ENCODE measurements at regions of chr5 and their contacts with region 1.

Region 1: DNA sequence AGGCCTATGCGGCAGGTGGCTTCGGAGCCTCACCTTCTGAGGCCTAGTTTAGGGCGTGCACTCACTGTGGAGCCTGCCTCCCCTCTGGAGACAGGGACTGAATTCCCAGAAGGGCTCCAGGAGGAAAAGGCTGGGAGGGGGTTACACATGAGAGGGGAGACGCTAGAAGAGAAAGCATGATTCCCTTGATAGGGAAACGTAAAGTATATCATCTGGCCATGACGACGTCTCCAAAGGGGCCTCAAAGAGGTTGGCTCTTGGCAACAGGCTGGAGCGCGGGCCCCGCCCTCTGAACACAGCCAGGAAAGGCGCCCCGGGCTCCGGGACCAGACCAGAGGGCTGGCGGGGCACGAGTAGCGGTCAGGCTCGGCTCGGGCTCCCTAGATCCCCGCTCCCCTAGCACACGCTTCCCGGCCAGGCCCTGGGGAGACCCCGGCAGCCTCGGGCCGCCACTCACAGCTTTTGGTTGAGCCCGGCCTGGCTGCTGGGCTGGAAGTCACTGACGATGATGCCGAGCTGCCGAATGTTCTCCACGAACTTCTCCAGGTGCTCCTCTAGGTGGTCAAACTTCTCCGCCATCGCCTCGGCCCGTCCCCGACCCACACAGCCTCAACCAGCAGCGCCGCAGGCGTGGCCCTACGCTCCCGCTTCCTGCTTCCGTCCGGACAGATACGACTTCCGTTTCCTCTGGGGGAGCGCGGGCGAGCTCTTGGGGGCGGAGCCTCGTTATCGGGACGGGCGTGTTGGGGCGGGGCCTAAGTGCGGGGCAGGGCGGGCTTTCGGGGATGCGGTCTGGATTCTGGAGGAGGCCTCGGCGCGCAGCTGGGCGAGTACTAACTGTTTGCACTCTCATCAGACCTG is at the start of gene MED10:
- DNase-seq: peak; percentile 95 to 98 (median 97)
- ATAC-seq: peak; percentile 100
- H3K4me3 ChIP-seq: peak within 1 kb of the TSS; percentile 64 to 99 (median 98)
- H3K27ac ChIP-seq: peak within 1 kb of the TSS; percentile 60 to 95 (median 91)
- H3K4me1 ChIP-seq: peaks cover 0 to 26% (median 16%) of the 10 kb centered on the region in 12 donors
- H3K27me3 ChIP-seq: peaks cover 0 to 3% (median 0%) of the 10 kb centered on the region in 9 donors
- CTCF ChIP-seq: no peak
- POLR2A ChIP-seq: peak in 1 of 2 donors; percentile 73
- total RNA-seq, gene MED10: 13.2 to 30.7 (median 23.1) TPM

Region 2: GRCh38 chr5:5492087-5492933 is 885.8 kb before region 1 on chr5:
- intact Hi-C with region 1: loop called in 1 of 10 experiments (anchors 10 kb)
- DNase-seq: no peak
- ATAC-seq: peak in 3 of 4 donors; percentile 49 to 62 (median 57)
- H3K4me3 ChIP-seq: no peak overlapping the region
- H3K27ac ChIP-seq: no peak overlapping the region
- H3K4me1 ChIP-seq: peaks cover 0 to 31% (median 8%) of the 10 kb centered on the region in 12 donors
- H3K27me3 ChIP-seq: peaks cover 0 to 7% (median 0%) of the 10 kb centered on the region in 9 donors
- CTCF ChIP-seq: peak; percentile 55 to 78 (median 62)
- POLR2A ChIP-seq: no peak

Region 3: DNA sequence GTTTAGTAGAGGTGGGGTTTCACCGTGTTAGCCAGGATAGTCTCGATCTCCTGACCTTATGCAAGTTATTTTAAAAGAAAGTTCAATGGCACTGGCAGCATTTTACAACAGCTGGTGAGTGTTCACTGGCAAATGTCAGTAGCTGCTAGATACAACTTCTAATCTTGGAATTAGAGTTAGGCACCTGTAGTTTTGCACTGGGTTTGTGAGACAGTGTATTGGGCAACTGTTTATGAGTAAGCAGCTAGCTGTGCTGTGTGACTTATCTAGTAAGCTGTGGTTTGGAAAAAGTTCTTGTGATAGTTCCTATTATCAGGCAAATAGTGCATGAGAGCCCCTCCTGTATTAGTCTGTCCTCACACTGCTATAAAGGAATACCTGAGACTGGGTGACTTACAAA is 132.0 kb after region 1 on chr5:
- intact Hi-C with region 1: loop called in 1 of 10 experiments (anchors 10 kb)
- DNase-seq: no peak
- ATAC-seq: peak in 3 of 4 donors; percentile 58 to 81 (median 80)
- H3K4me3 ChIP-seq: no peak overlapping the region
- H3K27ac ChIP-seq: no peak overlapping the region
- H3K4me1 ChIP-seq: peaks cover 0 to 6% (median 0%) of the 10 kb centered on the region in 12 donors
- H3K27me3 ChIP-seq: no peaks in the 10 kb centered on the region
- CTCF ChIP-seq: no peak
- POLR2A ChIP-seq: no peak

Region 4: GRCh38 chr5:6583049-6583880 is 205.1 kb after region 1 on chr5:
- intact Hi-C with region 1: loop called in 2 of 10 experiments (anchors 10 kb)
- DNase-seq: peak in 4 of 5 donors; percentile 39 to 67 (median 53)
- ATAC-seq: peak; percentile 48 to 96 (median 84)
- H3K4me3 ChIP-seq: peak overlapping the region in 11 of 12 donors; percentile 30 to 61 (median 48)
- H3K27ac ChIP-seq: peak overlapping the region in 1 of 12 donors; percentile 2
- H3K4me1 ChIP-seq: peaks cover 0 to 15% (median 2%) of the 10 kb centered on the region in 12 donors
- H3K27me3 ChIP-seq: peaks cover 0 to 30% (median 0%) of the 10 kb centered on the region in 9 donors
- CTCF ChIP-seq: peak in 11 of 12 donors; percentile 17 to 65 (median 42)
- POLR2A ChIP-seq: no peak

Region 5: DNA sequence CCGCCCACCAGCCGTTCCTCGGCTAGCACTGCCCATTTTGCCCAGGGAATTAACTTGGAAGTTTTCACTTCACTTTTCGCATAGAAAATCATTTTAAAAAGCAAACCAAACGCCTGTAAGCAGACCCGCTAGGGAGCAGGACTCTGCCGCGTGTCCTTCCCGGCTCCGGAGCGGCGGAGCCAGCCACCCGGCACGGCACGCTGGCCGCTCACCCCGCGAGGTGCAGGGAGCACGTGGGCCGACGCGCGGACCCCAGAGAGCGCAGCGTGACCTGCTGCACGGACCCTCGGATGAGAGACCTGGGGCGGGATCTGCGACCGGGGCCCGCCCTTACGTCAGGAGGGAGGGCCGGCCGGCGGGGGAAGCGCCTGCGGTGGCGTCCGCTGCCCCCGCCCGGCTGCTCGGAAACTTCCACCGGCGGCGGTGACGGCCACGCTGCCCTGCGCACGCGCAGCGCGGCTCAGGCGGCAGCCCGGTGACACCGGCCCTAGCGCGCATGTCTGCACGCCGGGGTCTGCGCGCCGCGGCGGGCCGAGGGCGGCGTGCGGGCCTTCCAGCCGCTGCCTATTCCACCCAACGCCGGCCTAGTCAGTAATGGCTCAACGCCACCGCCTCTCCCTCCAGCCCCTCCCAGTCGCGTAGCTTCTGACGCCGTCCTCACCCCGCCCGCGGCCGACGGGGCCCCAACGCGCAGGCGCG is 334.6 kb after region 1 on chr5:
- intact Hi-C with region 1: loop called in 2 of 10 experiments (anchors 10 kb)
- DNase-seq: peak; percentile 97 to 99 (median 97)
- ATAC-seq: peak; percentile 86 to 94 (median 90)
- H3K4me3 ChIP-seq: peak overlapping the region; percentile 46 to 98 (median 78)
- H3K27ac ChIP-seq: peak overlapping the region; percentile 89 to 100 (median 98)
- H3K4me1 ChIP-seq: peaks cover 9 to 48% (median 34%) of the 10 kb centered on the region in 12 donors
- H3K27me3 ChIP-seq: no peaks in the 10 kb centered on the region
- CTCF ChIP-seq: peak in 1 of 12 donors; percentile 3
- POLR2A ChIP-seq: peak in 1 of 2 donors; percentile 84